ENCODE measurements at regions of chr6 and their contacts with region 1.

Region 1: GRCh38 chr6:130622142-130622541 is 205.1 kb upstream of the SMLR1 start:
- DNase-seq: no peak
- H3K4me3 ChIP-seq: no peak overlapping the region
- CTCF ChIP-seq: no peak
- POLR2A ChIP-seq: no peak

Region 2: DNA sequence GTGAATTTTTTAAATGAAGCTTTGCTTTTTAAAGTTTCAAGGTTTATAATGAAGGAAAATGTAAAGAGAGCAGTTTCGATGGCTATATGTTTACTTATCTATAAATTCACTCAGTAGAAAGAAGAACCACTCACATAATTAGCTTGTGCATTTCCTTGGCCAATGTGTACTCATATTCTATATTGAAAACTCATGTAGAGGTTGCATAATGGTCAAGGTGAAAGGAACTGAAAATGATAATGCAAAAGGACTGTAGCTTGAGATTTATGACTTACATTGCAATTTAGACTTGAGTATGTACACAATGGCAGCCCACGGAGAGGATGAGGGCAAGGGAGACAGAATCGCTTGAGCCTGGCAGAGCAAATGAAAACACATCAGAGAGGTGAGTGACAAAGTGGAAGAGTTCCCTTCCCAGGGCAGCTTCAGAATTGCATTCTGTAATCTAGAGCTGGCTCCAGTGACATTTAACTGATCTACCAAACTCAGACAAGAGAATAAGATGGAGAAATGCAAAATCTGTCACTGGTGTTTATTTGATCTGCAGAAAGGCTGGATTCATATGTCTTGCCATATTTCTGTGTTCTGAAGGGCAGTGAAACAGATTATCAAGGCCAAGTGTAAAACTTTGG is 64.5 kb before region 1 on chr6:
- intact Hi-C with region 1: loop called (anchors 2 kb)
- DNase-seq: no peak
- H3K4me3 ChIP-seq: no peak overlapping the region
- CTCF ChIP-seq: no peak
- POLR2A ChIP-seq: no peak

Region 3: DNA sequence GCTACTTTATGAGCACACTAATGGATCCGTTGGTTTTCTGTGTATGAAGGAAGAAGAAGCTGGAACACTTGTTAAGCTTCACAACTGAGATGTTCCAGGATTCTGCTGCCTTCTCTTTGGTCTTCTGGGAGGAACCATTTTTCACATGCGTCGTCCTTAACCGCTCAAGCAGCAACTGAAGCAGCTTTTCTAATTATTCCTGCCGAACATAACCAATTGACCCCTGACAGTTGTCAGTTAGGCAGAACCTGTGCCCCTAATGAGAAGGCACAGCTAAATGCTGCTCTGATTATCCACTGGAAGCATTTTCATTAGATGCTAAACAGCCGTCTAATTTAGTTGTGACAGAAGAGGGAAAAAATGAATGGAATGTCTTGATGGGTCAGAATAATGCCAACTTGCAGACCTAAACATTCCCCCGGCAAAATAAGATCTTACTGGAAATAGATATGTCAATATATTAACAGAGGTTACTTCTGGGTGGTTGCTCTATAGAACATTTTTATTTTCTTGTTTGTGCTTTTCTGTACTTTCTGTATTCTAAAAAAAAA is 120.1 kb after region 1 on chr6:
- intact Hi-C with region 1: no loop called
- DNase-seq: no peak
- H3K4me3 ChIP-seq: no peak overlapping the region
- CTCF ChIP-seq: no peak
- POLR2A ChIP-seq: no peak